Left ventricle myocardium inferior (tissue), 1 donor: ENCODE measurements at regions of chr12 and their contacts with region 1.

Region 1: DNA sequence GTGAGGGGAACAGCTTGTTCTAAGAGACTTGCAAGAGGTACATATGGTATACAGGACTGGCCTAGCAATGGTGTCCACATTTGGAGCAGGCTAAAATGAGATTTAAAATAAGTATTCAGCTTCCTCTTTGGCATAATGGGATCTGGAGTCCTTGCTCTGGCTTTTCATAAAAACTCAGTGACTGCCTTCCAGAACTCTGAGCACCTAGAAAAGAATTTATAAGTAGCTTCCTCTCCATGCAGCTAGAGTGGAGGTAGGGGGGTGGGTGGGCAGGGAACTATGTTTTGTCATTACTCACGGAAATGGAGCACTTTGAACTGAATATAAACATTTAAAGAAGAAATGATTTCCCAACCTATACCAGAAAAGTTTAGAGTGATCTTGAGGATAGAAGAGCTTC is 3.3 kb upstream of the C12orf71 start:
- DNase-seq: no peak
- H3K4me3 ChIP-seq: no peak overlapping the region
- H3K27ac ChIP-seq: no peak overlapping the region
- H3K4me1 ChIP-seq: no peaks in the 10 kb centered on the region
- H3K27me3 ChIP-seq: no peaks in the 10 kb centered on the region
- CTCF ChIP-seq: no peak

Region 2: GRCh38 chr12:27024291-27024690 is 61.4 kb before region 1 on chr12:
- intact Hi-C with region 1: loop called (anchors 5 kb)
- DNase-seq: no peak
- H3K4me3 ChIP-seq: no peak overlapping the region
- H3K27ac ChIP-seq: no peak overlapping the region
- H3K4me1 ChIP-seq: peaks cover 34% of the 10 kb centered on the region
- H3K27me3 ChIP-seq: no peaks in the 10 kb centered on the region
- CTCF ChIP-seq: no peak